Heart left ventricle (tissue), 16 donors: ENCODE measurements at regions of chr16 and their contacts with region 1.

Region 1: DNA sequence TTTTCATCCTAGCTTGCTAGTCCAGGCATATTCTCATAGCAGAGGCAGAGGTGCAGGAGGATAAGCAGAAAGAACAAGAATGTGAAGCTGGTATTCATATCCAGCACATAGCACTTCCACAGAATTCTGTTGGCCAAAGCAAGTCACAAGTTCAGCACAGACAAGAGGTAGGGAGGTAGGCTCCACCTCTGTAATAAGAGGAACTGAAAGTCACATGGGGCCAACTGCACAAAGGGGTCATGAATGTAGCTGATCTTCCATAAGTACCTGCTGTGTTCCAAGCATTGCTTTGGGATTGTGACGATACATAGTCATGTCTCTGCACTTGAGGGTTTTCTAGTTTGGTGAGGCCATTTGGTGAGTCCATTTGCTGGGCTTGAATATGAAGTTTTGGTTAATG is 110.8 kb upstream of the MPHOSPH6 start:
- DNase-seq: no peak
- ATAC-seq: peak in 1 of 4 donors; percentile 38
- H3K4me3 ChIP-seq: no peak overlapping the region
- H3K27ac ChIP-seq: peak overlapping the region in 11 of 12 donors; percentile 24 to 89 (median 62)
- H3K4me1 ChIP-seq: peaks cover 0 to 29% (median 11%) of the 10 kb centered on the region in 12 donors
- H3K27me3 ChIP-seq: no peaks in the 10 kb centered on the region
- CTCF ChIP-seq: no peak
- POLR2A ChIP-seq: no peak

Region 2: DNA sequence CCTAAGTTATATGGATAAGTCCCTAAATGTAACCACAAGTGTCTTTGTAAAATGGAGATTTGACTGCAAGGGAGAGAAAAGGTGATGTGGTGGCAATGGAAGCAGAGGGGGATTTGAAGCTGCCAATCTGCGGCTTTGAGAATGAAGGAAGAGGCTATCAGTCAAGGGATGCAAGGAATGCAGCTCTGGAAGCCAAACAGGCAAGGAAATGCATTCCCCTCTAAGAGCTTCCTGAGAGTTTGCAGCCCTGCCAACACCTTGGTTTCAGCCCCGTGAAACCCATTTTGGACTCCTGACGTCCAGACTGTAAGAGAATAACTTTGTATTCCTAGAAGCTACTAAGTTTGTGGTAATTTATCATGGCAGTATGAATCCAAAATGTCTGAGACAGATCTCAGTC is 56.5 kb after region 1 on chr16:
- intact Hi-C with region 1: loop called in 1 of 10 experiments (anchors 5 kb)
- DNase-seq: no peak
- ATAC-seq: no peak
- H3K4me3 ChIP-seq: no peak overlapping the region
- H3K27ac ChIP-seq: no peak overlapping the region
- H3K4me1 ChIP-seq: peaks cover 0 to 5% (median 0%) of the 10 kb centered on the region in 12 donors
- H3K27me3 ChIP-seq: peaks cover 0 to 5% (median 0%) of the 10 kb centered on the region in 9 donors
- CTCF ChIP-seq: no peak
- POLR2A ChIP-seq: no peak